ENCODE measurements at regions of chr17 and their contacts with region 1.

Region 1: GRCh38 chr17:6218333-6218732 is 148.2 kb downstream of the WSCD1 start:
- DNase-seq: no peak
- H3K4me3 Mint-ChIP-seq: no peak overlapping the region
- H3K27ac Mint-ChIP-seq: no peak overlapping the region
- H3K4me1 Mint-ChIP-seq: peaks cover 5% of the 10 kb centered on the region
- H3K27me3 Mint-ChIP-seq: peaks cover 47% of the 10 kb centered on the region

Region 2: GRCh38 chr17:6110592-6110991 is 107.7 kb before region 1 on chr17:
- CTCF ChIA-PET with region 1: no interaction called
- POLR2A ChIA-PET with region 1: no interaction called
- intact Hi-C with region 1: no loop called
- DNase-seq: no peak
- H3K4me3 Mint-ChIP-seq: no peak overlapping the region
- H3K27ac Mint-ChIP-seq: no peak overlapping the region
- H3K4me1 Mint-ChIP-seq: peaks cover 5% of the 10 kb centered on the region
- H3K27me3 Mint-ChIP-seq: peaks cover 23% of the 10 kb centered on the region

Region 3: DNA sequence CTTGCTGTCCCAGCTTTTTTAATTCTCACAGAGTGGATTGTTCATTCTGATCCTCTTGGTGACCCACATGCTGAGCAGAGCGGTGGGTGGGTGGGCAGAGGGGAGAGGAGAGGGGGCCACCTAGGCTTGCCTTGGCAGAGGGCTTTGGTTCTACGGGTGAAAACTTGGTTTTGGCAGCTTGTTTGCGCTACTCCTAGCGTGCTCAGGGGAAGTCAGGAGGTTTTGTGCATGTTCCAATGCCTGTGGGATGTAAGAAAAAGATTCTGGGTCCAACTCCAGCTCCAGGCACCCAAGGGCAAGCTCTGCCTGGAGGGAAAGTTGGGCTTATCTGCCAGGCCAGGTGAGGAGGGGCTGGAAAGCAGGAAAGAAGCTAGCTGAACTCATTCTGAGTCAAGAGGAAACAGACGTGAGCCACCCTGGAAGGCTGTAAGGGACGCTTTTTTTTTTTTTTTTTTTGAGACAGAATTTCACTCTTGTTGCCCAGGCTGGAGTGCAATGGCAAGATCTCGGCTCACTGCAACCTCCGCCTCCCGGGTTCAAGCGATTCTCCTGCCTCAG is 21.0 kb after region 1 on chr17:
- CTCF ChIA-PET with region 1: no interaction called
- POLR2A ChIA-PET with region 1: no interaction called
- intact Hi-C with region 1: no loop called
- DNase-seq: no peak
- H3K4me3 Mint-ChIP-seq: no peak overlapping the region
- H3K27ac Mint-ChIP-seq: no peak overlapping the region
- H3K4me1 Mint-ChIP-seq: no peaks in the 10 kb centered on the region
- H3K27me3 Mint-ChIP-seq: peaks cover 35% of the 10 kb centered on the region

Region 4: GRCh38 chr17:6374761-6375312 is 156.5 kb after region 1 on chr17:
- CTCF ChIA-PET with region 1: no interaction called
- POLR2A ChIA-PET with region 1: no interaction called
- intact Hi-C with region 1: loop called (anchors 1 kb)
- DNase-seq: peak; percentile 88
- H3K4me3 Mint-ChIP-seq: peak overlapping the region; percentile 4
- H3K27ac Mint-ChIP-seq: peak overlapping the region; percentile 10
- H3K4me1 Mint-ChIP-seq: peaks cover 19% of the 10 kb centered on the region
- H3K27me3 Mint-ChIP-seq: peaks cover 46% of the 10 kb centered on the region

Measured in activated CD4-positive, alpha-beta memory T cell treated with anti-CD3 and anti-CD28 coated beads for 36 hours (primary cell).